ENCODE measurements at regions of chr17 and their contacts with region 1.

Region 1: DNA sequence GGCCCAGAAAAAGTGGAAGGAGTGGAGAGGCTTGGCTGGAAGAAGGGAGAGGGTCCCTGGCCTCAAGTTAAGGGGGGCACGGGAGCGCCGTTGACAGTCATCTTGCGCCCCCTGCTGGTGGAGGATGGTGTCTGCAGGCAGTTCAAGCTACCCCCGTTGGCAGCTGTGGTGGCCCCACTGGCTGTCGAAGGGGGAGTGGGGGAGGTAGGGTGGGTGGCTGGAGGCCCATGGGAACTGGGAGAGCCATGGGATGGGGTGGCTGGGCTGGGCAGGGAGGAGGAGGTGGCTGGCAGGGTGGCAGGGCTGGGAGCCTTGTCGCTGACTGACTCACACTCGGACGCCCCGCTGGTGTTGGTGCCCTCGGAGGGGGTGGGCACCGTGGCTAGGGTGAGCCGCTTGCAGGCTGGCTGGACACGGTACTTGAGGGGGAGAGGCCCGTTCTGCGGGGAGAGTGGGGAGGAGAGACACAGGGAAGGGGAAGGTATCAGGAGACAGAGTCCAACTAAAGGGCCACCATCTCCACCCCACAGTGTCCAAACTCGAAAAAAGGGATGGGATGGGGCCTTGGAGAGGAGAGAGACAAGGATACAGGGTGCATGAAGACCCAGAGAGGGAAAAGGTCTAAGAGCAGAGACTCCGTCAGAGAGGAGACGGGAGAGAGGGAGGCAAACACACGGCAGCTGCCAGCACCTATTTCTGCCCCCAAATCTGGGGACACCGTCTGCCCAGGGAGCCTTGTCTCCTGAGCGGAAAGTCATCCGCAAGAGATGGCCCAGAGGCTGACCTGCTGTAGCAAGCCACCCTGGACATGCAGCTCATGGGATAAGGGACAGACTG is 5.2 kb downstream of the CISD3 start:
- DNase-seq: no peak
- ATAC-seq: peak; percentile 57
- H3K4me3 ChIP-seq: no peak overlapping the region
- H3K27ac ChIP-seq: no peak overlapping the region
- H3K4me1 ChIP-seq: peaks cover 20% of the 10 kb centered on the region
- H3K27me3 ChIP-seq: no peaks in the 10 kb centered on the region
- CTCF ChIP-seq: peak; percentile 92 to 96 (median 95); a peak in 5 of 6 replicates
- EP300 ChIP-seq: no peak
- POLR2A ChIP-seq: no peak
- RAD21 ChIP-seq: peak; percentile 75

Region 2: GRCh38 chr17:38702166-38702899 is 33.0 kb before region 1 on chr17:
- CTCF ChIA-PET with region 1: interaction called, 17 read pairs
- POLR2A ChIA-PET with region 1: interaction called, 4 read pairs
- RAD21 ChIA-PET with region 1: interaction called, 20 read pairs
- SMC1A ChIA-PET with region 1: interaction called, 4 read pairs
- in situ Hi-C with region 1: no loop called
- intact Hi-C with region 1: loop called (anchors 2 kb)
- DNase-seq: no peak
- ATAC-seq: peak; percentile 38
- H3K4me3 ChIP-seq: peak overlapping the region; percentile 91
- H3K27ac ChIP-seq: peak overlapping the region; percentile 100
- H3K4me1 ChIP-seq: peaks cover 27% of the 10 kb centered on the region
- H3K27me3 ChIP-seq: no peaks in the 10 kb centered on the region
- CTCF ChIP-seq: no peak
- EP300 ChIP-seq: peak; percentile 8 to 56; a peak in 1 of 4 replicates
- POLR2A ChIP-seq: peak; percentile 90
- RAD21 ChIP-seq: no peak

Region 3: DNA sequence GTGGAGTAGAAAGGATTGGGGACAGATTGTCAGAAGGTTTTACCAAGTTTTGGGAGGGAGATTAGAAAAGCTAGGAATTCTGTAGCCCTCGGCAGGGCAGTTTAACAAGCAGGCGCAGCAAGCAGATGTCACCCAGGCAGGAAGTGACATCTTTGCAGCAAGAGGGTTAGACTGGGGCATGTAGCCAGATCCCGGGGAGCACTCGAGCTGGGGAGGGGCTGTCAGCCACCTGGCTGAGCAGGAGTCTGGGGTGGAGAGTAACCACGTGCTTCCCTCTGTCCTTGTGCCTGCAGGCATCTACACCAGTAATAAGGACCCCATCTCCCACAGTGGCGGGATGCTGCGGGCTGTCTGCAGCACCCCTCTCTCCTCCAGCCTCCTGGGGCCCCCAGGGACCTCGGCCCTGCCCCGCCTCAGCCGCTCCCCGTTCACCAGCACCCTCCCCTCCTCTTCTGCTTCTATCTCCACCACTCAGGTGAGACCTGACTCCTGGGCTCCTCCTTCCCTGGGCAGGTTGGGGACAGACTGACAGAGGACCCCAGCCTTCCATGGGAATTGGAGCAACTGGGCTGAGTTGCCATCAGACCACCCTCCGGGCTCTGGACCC is 18.1 kb before region 1 on chr17:
- CTCF ChIA-PET with region 1: interaction called, 11 read pairs
- POLR2A ChIA-PET with region 1: no interaction called
- RAD21 ChIA-PET with region 1: no interaction called
- SMC1A ChIA-PET with region 1: no interaction called
- in situ Hi-C with region 1: no loop called
- intact Hi-C with region 1: no loop called
- DNase-seq: no peak
- ATAC-seq: no peak
- H3K4me3 ChIP-seq: no peak overlapping the region
- H3K27ac ChIP-seq: no peak overlapping the region
- H3K4me1 ChIP-seq: peaks cover 10% of the 10 kb centered on the region
- H3K27me3 ChIP-seq: no peaks in the 10 kb centered on the region
- CTCF ChIP-seq: no peak
- EP300 ChIP-seq: no peak
- POLR2A ChIP-seq: peak; percentile 35; the same call in 1 of the 2 replicates
- RAD21 ChIP-seq: no peak

Region 4: DNA sequence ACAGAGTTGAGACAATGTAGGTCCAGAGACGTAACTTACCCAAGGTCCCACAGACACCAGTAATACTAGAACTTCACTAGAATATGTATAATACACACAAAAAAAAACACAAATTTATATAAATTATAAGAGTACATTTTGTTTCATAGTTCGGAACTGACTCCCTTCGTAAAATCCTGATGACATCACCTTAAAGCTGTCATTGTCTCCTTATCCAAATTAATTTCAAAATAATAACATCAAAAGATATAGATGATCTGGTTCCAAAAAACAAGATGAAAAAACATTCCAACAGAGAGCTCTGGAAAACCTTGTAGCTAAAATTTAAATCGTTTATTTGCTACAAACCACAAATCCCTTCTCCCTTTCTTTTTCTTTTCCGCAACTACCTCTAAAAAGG is 656.1 kb after region 1 on chr17:
- CTCF ChIA-PET with region 1: no interaction called
- POLR2A ChIA-PET with region 1: no interaction called
- RAD21 ChIA-PET with region 1: no interaction called
- SMC1A ChIA-PET with region 1: no interaction called
- in situ Hi-C with region 1: no loop called
- intact Hi-C with region 1: no loop called
- DNase-seq: no peak
- ATAC-seq: no peak
- H3K4me3 ChIP-seq: no peak overlapping the region
- H3K27ac ChIP-seq: no peak overlapping the region
- H3K4me1 ChIP-seq: no peaks in the 10 kb centered on the region
- H3K27me3 ChIP-seq: no peaks in the 10 kb centered on the region
- CTCF ChIP-seq: no peak
- EP300 ChIP-seq: no peak
- POLR2A ChIP-seq: no peak
- RAD21 ChIP-seq: no peak